ENCODE measurements at regions of chr10 and their contacts with region 1.

Region 1: DNA sequence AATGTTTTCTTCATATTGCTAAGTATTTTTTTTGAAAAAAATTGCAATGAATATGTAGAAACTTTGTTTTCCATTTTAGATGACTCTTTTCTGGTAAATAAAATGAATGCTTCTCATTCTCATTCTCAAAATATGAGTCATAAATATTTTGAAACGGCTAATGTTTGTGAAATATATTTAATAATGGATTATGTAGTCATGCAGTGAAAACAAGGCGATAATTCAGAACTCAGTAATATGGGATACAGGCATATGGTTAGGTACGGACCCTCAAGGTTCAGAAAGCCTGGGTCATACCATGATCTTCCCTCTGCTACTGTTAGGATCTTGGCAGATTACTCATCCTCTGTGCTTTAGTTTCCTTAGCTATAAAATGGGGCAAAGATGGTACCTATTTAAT is 46.2 kb upstream of the SLC39A12 start:
- DNase-seq: no peak
- H3K4me3 ChIP-seq: no peak overlapping the region
- H3K27ac ChIP-seq: no peak overlapping the region
- H3K4me1 ChIP-seq: no peaks in the 10 kb centered on the region
- H3K27me3 ChIP-seq: no peaks in the 10 kb centered on the region
- CTCF ChIP-seq: no peak
- POLR2A ChIP-seq: no peak

Region 2: GRCh38 chr10:17228091-17228940 is 677.2 kb before region 1 on chr10 and contains the start of gene VIM:
- intact Hi-C with region 1: no loop called
- DNase-seq: peak; percentile 95
- H3K4me3 ChIP-seq: peak within 1 kb of the TSS; percentile 93 to 99 (median 96)
- H3K27ac ChIP-seq: peak within 1 kb of the TSS; percentile 93 to 100 (median 99)
- H3K4me1 ChIP-seq: peaks cover 13 to 60% (median 50%) of the 10 kb centered on the region in 6 donors
- H3K27me3 ChIP-seq: no peaks in the 10 kb centered on the region
- CTCF ChIP-seq: peak in 1 of 11 experiments; percentile 31
- POLR2A ChIP-seq: peak in 1 of 3 donors; percentile 58
- total RNA-seq, gene VIM: 1,061 to 2,377 (median 1,594) TPM

Region 3: GRCh38 chr10:17851611-17852010 is 53.9 kb before region 1 on chr10:
- intact Hi-C with region 1: loop called (anchors 2 kb)
- DNase-seq: no peak
- H3K4me3 ChIP-seq: no peak overlapping the region
- H3K27ac ChIP-seq: peak overlapping the region in 1 of 8 donors; percentile 19
- H3K4me1 ChIP-seq: peaks cover 0 to 23% (median 6%) of the 10 kb centered on the region in 6 donors
- H3K27me3 ChIP-seq: no peaks in the 10 kb centered on the region
- CTCF ChIP-seq: no peak
- POLR2A ChIP-seq: no peak

Region 4: DNA sequence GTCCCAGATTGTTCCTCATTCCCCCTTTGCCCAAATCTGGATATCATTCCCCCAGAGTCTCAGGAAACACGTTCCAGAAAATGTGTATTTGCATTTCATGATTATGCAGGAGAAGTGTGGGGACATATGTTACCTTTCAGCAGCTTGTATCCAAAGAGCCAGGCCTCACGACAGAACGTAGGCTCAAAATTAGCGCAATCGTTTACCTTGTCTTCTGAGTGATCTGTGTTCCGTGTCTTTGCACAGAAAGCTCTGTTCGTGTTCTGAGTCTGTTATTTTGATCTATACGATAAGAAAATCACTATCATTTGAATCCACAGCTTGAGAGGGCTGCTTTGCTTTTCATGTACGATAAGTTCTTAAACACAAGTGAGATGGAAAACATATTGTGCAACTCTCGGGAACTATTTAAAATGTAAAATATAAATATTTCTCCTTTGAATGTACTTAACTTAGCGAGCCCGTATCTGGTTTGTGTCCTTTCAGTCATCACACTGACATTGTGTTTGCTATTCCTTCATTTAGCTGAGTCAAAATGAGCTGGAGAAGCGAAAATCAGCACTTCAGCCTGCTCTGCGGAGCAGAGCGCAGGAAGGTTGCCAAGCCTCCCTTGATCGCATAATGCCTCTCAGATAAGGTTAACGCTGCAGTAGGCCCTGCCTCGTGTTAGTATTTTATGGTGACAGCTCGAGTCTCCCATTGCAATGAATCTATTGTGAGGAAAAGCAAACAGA is 154.5 kb after region 1 on chr10:
- intact Hi-C with region 1: no loop called
- DNase-seq: no peak
- H3K4me3 ChIP-seq: no peak overlapping the region
- H3K27ac ChIP-seq: no peak overlapping the region
- H3K4me1 ChIP-seq: no peaks in the 10 kb centered on the region
- H3K27me3 ChIP-seq: no peaks in the 10 kb centered on the region
- CTCF ChIP-seq: no peak
- POLR2A ChIP-seq: no peak

Region 5: GRCh38 chr10:18204039-18204835 is 298.7 kb after region 1 on chr10:
- intact Hi-C with region 1: no loop called
- DNase-seq: no peak
- H3K4me3 ChIP-seq: no peak overlapping the region
- H3K27ac ChIP-seq: no peak overlapping the region
- H3K4me1 ChIP-seq: no peaks in the 10 kb centered on the region
- H3K27me3 ChIP-seq: no peaks in the 10 kb centered on the region
- CTCF ChIP-seq: no peak
- POLR2A ChIP-seq: no peak

Measured in spleen (tissue), 13 donors.